Tibial artery (tissue), 4 donors: ENCODE measurements at regions of chr4 and their contacts with region 1.

Region 1: GRCh38 chr4:41420541-41420940 is 117.4 kb upstream of the LIMCH1 start:
- DNase-seq: no peak
- H3K4me3 ChIP-seq: no peak overlapping the region
- H3K27ac ChIP-seq: peak overlapping the region; percentile 63 to 72
- H3K4me1 ChIP-seq: peaks cover 0 to 82% (median 18%) of the 10 kb centered on the region in 4 donors
- H3K27me3 ChIP-seq: no peaks in the 10 kb centered on the region
- CTCF ChIP-seq: no peak

Region 2: GRCh38 chr4:41360214-41360920 is 60.2 kb before region 1 on chr4:
- intact Hi-C with region 1: loop called (anchors 5 kb)
- DNase-seq: peak; percentile 67 to 88
- H3K4me3 ChIP-seq: peak overlapping the region; percentile 86 to 90
- H3K27ac ChIP-seq: peak overlapping the region; percentile 89 to 95
- H3K4me1 ChIP-seq: peaks cover 3 to 48% (median 25%) of the 10 kb centered on the region in 4 donors
- H3K27me3 ChIP-seq: no peaks in the 10 kb centered on the region
- CTCF ChIP-seq: no peak

Region 3: GRCh38 chr4:41475402-41475801 is 54.9 kb after region 1 on chr4:
- intact Hi-C with region 1: no loop called
- DNase-seq: no peak
- H3K4me3 ChIP-seq: no peak overlapping the region
- H3K27ac ChIP-seq: no peak overlapping the region
- H3K4me1 ChIP-seq: peaks cover 0 to 31% (median 15%) of the 10 kb centered on the region in 4 donors
- H3K27me3 ChIP-seq: no peaks in the 10 kb centered on the region
- CTCF ChIP-seq: no peak

Region 4: GRCh38 chr4:41969671-41970070 is 549.1 kb after region 1 on chr4:
- intact Hi-C with region 1: no loop called
- DNase-seq: no peak
- H3K4me3 ChIP-seq: no peak overlapping the region
- H3K27ac ChIP-seq: no peak overlapping the region
- H3K4me1 ChIP-seq: no peaks in the 10 kb centered on the region
- H3K27me3 ChIP-seq: no peaks in the 10 kb centered on the region
- CTCF ChIP-seq: no peak